ENCODE measurements at regions of chr7 and their contacts with region 1.

Region 1: GRCh38 chr7:96179837-96180236 is 142.1 kb downstream of the SLC25A13 start:
- DNase-seq: no peak
- H3K4me3 ChIP-seq: no peak overlapping the region
- H3K27ac ChIP-seq: no peak overlapping the region
- H3K4me1 ChIP-seq: peaks cover 15% of the 10 kb centered on the region
- H3K27me3 ChIP-seq: no peaks in the 10 kb centered on the region
- CTCF ChIP-seq: peak in 1 of 2 donors; percentile 15

Region 2: GRCh38 chr7:95577137-95577536 is 602.7 kb before region 1 on chr7:
- CTCF ChIA-PET with region 1: no interaction called
- dilution Hi-C with region 1: no loop called
- in situ Hi-C with region 1: no loop called
- intact Hi-C with region 1: no loop called
- DNase-seq: peak; percentile 25
- H3K4me3 ChIP-seq: no peak overlapping the region
- H3K27ac ChIP-seq: no peak overlapping the region
- H3K4me1 ChIP-seq: no peaks in the 10 kb centered on the region
- H3K27me3 ChIP-seq: no peaks in the 10 kb centered on the region
- CTCF ChIP-seq: no peak

Region 3: GRCh38 chr7:95980167-95980566 is 199.7 kb before region 1 on chr7:
- CTCF ChIA-PET with region 1: no interaction called
- dilution Hi-C with region 1: no loop called
- in situ Hi-C with region 1: no loop called
- intact Hi-C with region 1: no loop called
- DNase-seq: no peak
- H3K4me3 ChIP-seq: no peak overlapping the region
- H3K27ac ChIP-seq: no peak overlapping the region
- H3K4me1 ChIP-seq: no peaks in the 10 kb centered on the region
- H3K27me3 ChIP-seq: no peaks in the 10 kb centered on the region
- CTCF ChIP-seq: no peak

Region 4: GRCh38 chr7:96075510-96076349 is 104.1 kb before region 1 on chr7:
- CTCF ChIA-PET with region 1: no interaction called
- dilution Hi-C with region 1: no loop called
- in situ Hi-C with region 1: no loop called
- intact Hi-C with region 1: loop called (anchors 2 kb)
- DNase-seq: peak; percentile 26
- H3K4me3 ChIP-seq: peak overlapping the region; percentile 50 to 74 (median 61)
- H3K27ac ChIP-seq: no peak overlapping the region
- H3K4me1 ChIP-seq: peaks cover 12% of the 10 kb centered on the region
- H3K27me3 ChIP-seq: no peaks in the 10 kb centered on the region
- CTCF ChIP-seq: peak; percentile 79 to 91

Measured in mammary epithelial cell (primary cell).